ENCODE measurements at regions of chr9 and their contacts with region 1.

Region 1: GRCh38 chr9:38160613-38161215 is 91.7 kb upstream of the SHB start:
- DNase-seq: peak; percentile 86
- ATAC-seq: peak; percentile 87
- H3K4me3 Mint-ChIP-seq: no peak overlapping the region
- H3K27ac Mint-ChIP-seq: no peak overlapping the region; the same call in 1 of the 2 replicates
- H3K4me1 Mint-ChIP-seq: no peaks in the 10 kb centered on the region
- H3K27me3 Mint-ChIP-seq: peaks cover 7% of the 10 kb centered on the region
- CTCF ChIP-seq: peak; percentile 91

Region 2: GRCh38 chr9:38172585-38172984 is 11.9 kb after region 1 on chr9:
- CTCF ChIA-PET with region 1: interaction called, 14 read pairs
- POLR2A ChIA-PET with region 1: no interaction called
- DNase-seq: peak; percentile 26
- ATAC-seq: peak; percentile 89
- H3K4me3 Mint-ChIP-seq: no peak overlapping the region
- H3K27ac Mint-ChIP-seq: peak overlapping the region; percentile 65; the same call in 1 of the 2 replicates
- H3K4me1 Mint-ChIP-seq: peaks cover 29% of the 10 kb centered on the region
- H3K27me3 Mint-ChIP-seq: peaks cover 26% of the 10 kb centered on the region
- CTCF ChIP-seq: no peak

Measured in WTC11 (cell line).